ENCODE measurements at regions of chr22 and their contacts with region 1.

Region 1: GRCh38 chr22:23849009-23850006 is 8.4 kb upstream of the SLC2A11 start:
- DNase-seq: no peak
- H3K4me3 ChIP-seq: peak overlapping the region; percentile 25; the same call in 1 of the 2 replicates
- CTCF ChIP-seq: peak; percentile 95

Region 2: DNA sequence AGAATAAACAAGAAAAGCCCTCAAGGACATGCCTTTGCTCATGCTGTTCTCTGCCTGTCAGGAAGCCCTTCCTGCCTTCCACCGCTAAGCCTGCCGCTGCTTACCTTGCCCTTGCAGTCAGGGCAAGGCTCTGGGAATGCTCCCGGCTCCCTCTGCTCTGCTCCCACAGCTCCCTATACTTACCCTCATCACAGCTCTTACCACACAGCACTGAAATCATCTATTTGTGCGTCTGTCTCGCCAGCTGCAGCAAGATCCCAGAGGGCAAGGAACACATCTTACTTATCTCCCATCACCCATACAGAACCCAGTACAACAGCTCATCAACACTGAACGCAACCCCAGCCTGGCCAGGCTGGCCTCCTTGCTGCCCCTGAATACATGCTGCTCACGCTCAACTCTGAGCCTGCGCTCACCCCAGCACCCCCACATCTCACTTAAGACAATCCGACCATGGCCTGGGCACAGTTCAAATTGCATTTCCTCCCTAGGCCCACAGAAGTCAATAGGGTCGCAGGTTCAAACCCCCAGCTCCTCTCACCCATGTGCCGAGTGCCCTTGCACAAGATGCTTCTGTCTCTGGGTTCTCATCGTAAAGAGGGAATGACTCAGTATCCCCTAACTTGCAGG is 431.0 kb before region 1 on chr22:
- CTCF ChIA-PET with region 1: no interaction called
- POLR2A ChIA-PET with region 1: no interaction called
- DNase-seq: no peak
- H3K4me3 ChIP-seq: no peak overlapping the region
- CTCF ChIP-seq: no peak

Region 3: GRCh38 chr22:23539135-23539838 is 310.0 kb before region 1 on chr22:
- CTCF ChIA-PET with region 1: interaction called, 16 read pairs
- POLR2A ChIA-PET with region 1: no interaction called
- DNase-seq: peak; percentile 10
- H3K4me3 ChIP-seq: peak overlapping the region; percentile 27
- CTCF ChIP-seq: peak; percentile 79

Region 4: DNA sequence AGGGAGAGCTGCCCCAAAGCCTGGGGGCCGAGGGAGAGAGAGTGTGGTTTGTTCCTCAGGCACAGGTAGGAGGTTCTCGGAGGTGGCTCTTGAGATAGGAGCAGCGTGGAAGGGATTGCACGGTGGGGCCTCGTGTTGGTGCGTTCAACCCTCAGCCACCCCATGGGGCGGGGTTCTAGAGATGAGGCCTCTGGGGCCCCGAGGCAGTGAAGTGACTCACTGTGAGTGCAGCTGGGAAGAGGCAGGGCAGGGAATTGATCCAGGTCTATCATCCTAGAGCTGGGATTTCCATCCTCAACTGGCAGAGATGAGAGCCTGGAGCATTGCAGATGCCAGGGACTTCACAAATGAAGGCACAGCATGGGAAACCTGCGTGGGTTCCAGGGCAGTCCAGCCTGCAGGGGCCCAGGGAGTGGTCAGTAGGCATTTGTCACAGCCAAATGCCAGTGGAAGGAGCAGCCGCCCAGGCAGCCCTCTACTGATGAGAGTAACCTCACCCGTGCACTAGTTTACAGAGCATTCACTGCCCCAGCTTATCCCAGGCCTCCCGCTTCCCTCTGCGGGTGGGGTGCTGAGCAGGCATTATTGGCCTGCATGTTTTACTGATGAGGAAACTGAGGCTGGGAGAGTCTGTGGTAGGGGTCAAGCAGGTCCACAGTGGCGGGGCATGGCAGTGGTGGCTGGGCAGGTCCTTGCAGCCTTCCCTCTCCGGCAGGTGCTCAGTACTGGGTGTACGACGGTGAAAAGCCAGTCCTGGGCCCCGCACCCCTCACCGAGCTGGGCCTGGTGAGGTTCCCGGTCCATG is 67.6 kb before region 1 on chr22:
- CTCF ChIA-PET with region 1: interaction called, 387 read pairs
- POLR2A ChIA-PET with region 1: interaction called, 4 read pairs
- DNase-seq: no peak
- H3K4me3 ChIP-seq: no peak overlapping the region
- CTCF ChIP-seq: no peak

Region 5: GRCh38 chr22:23786752-23787599 is 62.3 kb before region 1 on chr22 and contains the start of gene SMARCB1:
- CTCF ChIA-PET with region 1: interaction called, 14 read pairs
- POLR2A ChIA-PET with region 1: interaction called, 4 read pairs
- DNase-seq: peak; percentile 69
- H3K4me3 ChIP-seq: peak within 1 kb of the TSS; percentile 90
- CTCF ChIP-seq: no peak

Region 6: GRCh38 chr22:23838681-23839468 is 10.4 kb before region 1 on chr22 and contains the start of gene DERL3:
- CTCF ChIA-PET with region 1: interaction called, 38 read pairs
- POLR2A ChIA-PET with region 1: no interaction called
- DNase-seq: peak; percentile 46
- H3K4me3 ChIP-seq: peak within 1 kb of the TSS; percentile 47
- CTCF ChIP-seq: no peak

Region 7: DNA sequence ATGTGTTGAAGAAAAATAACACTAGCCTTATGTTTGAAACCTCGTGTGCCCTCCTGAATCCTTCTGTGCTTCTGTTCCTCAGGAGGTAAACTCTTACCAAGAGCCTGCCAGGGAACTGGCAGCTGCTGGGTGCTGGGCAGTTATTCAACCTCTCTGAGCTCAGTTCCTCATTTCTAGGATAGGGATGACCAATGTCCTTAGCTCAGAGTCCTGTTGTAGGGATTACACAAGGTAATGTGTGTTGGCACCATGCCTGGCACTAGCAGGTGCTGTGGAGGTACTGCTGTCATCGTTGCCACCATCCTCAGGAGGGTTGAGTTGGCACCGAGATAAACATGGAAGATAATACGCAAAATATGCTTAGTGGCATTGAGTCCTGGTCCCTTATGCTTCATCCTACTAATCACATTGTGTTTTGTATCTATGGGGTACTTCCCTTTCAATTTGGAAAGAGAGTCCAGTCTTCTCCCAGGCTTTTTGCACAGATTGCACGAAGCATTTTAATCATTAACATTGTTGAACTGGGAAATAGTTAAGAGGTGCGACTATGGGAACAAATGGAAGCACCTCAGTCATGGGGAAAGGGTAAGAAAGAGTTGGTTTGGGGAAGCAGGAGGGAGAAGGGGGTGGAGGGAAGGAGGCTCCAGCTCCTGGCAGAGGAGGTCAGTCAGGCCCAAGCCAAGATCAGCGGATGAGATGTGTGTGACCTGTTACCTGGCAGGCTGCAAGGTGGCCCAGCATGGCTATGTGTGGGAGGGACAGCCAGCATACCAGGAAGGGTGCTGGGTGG is 218.5 kb after region 1 on chr22:
- CTCF ChIA-PET with region 1: no interaction called
- POLR2A ChIA-PET with region 1: no interaction called
- DNase-seq: no peak
- H3K4me3 ChIP-seq: no peak overlapping the region
- CTCF ChIP-seq: no peak